Heart right ventricle (tissue), 16 donors: ENCODE measurements at regions of chr6 and their contacts with region 1.

Region 1: DNA sequence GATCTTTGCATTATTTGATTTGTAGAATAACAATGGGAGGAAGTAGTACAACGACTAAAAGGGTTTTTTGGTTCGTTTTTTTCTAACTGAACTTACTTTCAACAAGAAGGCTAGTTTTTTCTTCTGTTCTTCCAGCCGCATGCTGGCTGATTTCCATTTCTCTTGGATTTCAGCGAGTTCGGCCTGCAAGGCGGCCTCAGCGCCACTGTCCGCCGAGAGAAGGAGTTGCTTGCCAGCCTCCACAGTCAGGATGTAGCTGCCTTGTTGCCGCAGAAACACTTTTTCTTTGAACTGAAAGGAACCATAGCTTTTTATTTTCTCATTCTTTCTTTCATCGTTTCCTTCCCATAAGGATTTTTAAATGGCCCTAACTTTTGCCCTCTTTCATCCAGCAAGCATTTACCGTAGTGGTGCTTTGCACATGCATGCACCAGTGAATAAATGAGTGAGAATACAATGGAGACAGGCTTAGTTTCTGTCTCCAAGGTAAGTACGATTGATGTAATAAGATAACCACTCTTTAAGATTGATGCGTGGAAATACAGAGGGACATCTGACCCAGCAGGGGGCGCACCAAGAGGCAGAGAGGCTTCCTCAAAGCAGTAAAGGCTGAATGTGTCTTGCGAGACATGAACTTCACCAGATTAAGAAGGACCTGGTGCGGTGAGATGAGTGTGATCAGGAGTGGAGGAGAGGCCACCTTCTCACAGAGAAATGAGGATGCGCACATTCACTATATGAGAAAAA is 398.8 kb downstream of the ESR1 start:
- DNase-seq: peak in 1 of 2 donors; percentile 30
- ATAC-seq: no peak
- H3K4me3 ChIP-seq: no peak overlapping the region
- H3K27ac ChIP-seq: no peak overlapping the region
- H3K4me1 ChIP-seq: no peaks in the 10 kb centered on the region
- H3K27me3 ChIP-seq: no peaks in the 10 kb centered on the region
- CTCF ChIP-seq: peak; percentile 3 to 58 (median 44)

Region 2: DNA sequence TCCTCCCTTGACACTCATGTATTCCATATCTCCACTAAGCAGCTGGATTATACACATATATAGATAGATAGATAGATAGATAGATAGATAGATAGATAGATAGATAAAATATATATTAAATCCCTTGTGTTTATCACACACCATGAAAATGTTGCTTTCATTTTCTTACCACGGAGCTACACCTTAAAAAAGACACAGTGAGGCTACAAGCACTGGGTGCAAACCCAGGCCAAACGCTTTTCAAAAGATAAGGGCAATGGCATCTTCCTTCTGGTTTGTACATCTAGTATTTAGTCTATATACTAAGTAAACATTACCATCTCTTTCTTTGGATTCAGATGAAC is 21.7 kb before region 1 on chr6:
- intact Hi-C with region 1: loop called in 1 of 10 experiments (anchors 2 kb)
- DNase-seq: no peak
- ATAC-seq: no peak
- H3K4me3 ChIP-seq: peak overlapping the region in 1 of 10 donors; percentile 29
- H3K27ac ChIP-seq: peak overlapping the region in 1 of 10 donors; percentile 81
- H3K4me1 ChIP-seq: peaks cover 0 to 10% (median 0%) of the 10 kb centered on the region in 9 donors
- H3K27me3 ChIP-seq: no peaks in the 10 kb centered on the region
- CTCF ChIP-seq: no peak

Region 3: GRCh38 chr6:152356451-152357061 is 150.3 kb after region 1 on chr6:
- intact Hi-C with region 1: loop called in 2 of 10 experiments (anchors 10 kb)
- DNase-seq: no peak
- ATAC-seq: peak in 4 of 8 donors; percentile 25 to 63 (median 53)
- H3K4me3 ChIP-seq: no peak overlapping the region
- H3K27ac ChIP-seq: no peak overlapping the region
- H3K4me1 ChIP-seq: peaks cover 0 to 14% (median 4%) of the 10 kb centered on the region in 9 donors
- H3K27me3 ChIP-seq: no peaks in the 10 kb centered on the region
- CTCF ChIP-seq: peak in 8 of 9 donors; percentile 4 to 47 (median 37)